ENCODE measurements at regions of chr16 and their contacts with region 1.

Region 1: GRCh38 chr16:69565671-69566239 is at the start of gene NFAT5:
- DNase-seq: peak; percentile 96 to 98
- H3K4me3 ChIP-seq: peak within 1 kb of the TSS; percentile 89
- H3K4me3 Mint-ChIP-seq: peak within 1 kb of the TSS; percentile 98
- H3K27ac Mint-ChIP-seq: peak within 1 kb of the TSS; percentile 96
- H3K4me1 ChIP-seq: peaks cover 38% of the 10 kb centered on the region
- H3K4me1 Mint-ChIP-seq: peaks cover 24% of the 10 kb centered on the region
- H3K27me3 ChIP-seq: no peaks in the 10 kb centered on the region
- H3K27me3 Mint-ChIP-seq: no peaks in the 10 kb centered on the region
- CTCF ChIP-seq: peak in 1 of 2 experiments; percentile 43
- total RNA-seq, gene NFAT5: 87.6 and 89.8 TPM in 2 replicates

Region 2: GRCh38 chr16:69404275-69404805 is 161.4 kb before region 1 on chr16:
- CTCF ChIA-PET with region 1: interaction called, 5 read pairs
- POLR2A ChIA-PET with region 1: no interaction called
- intact Hi-C with region 1: loop called (anchors 1 kb)
- DNase-seq: peak; percentile 90 to 96
- H3K4me3 ChIP-seq: peak overlapping the region; percentile 21
- H3K4me3 Mint-ChIP-seq: peak overlapping the region; percentile 43
- H3K27ac Mint-ChIP-seq: peak overlapping the region; percentile 50
- H3K4me1 ChIP-seq: peaks cover 53% of the 10 kb centered on the region
- H3K4me1 Mint-ChIP-seq: peaks cover 48% of the 10 kb centered on the region
- H3K27me3 ChIP-seq: no peaks in the 10 kb centered on the region
- H3K27me3 Mint-ChIP-seq: no peaks in the 10 kb centered on the region
- CTCF ChIP-seq: no peak

Region 3: DNA sequence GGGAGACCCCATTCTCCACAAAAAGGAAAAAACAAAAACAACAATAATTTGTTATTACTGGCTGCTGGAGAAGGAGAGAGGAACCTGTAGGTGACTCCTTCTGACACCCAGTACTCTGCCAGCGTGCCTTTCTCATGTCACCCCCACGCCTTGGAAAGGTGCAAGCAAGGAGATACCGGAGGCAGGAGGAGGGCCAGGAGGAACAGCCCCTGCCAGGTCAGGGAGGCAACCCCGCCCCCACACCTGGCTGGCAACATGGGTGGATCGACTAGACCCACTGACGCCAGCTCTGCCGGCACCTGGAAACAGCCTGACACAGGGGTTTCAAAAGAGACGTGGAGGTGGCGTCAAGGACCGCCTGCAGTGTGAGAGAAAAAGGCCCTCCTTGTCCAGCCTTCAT is 79.1 kb before region 1 on chr16:
- CTCF ChIA-PET with region 1: no interaction called
- POLR2A ChIA-PET with region 1: no interaction called
- intact Hi-C with region 1: no loop called
- DNase-seq: no peak
- H3K4me3 ChIP-seq: no peak overlapping the region
- H3K4me3 Mint-ChIP-seq: no peak overlapping the region
- H3K27ac Mint-ChIP-seq: no peak overlapping the region
- H3K4me1 ChIP-seq: no peaks in the 10 kb centered on the region
- H3K4me1 Mint-ChIP-seq: peaks cover 6% of the 10 kb centered on the region
- H3K27me3 ChIP-seq: no peaks in the 10 kb centered on the region
- H3K27me3 Mint-ChIP-seq: no peaks in the 10 kb centered on the region
- CTCF ChIP-seq: no peak

Region 4: DNA sequence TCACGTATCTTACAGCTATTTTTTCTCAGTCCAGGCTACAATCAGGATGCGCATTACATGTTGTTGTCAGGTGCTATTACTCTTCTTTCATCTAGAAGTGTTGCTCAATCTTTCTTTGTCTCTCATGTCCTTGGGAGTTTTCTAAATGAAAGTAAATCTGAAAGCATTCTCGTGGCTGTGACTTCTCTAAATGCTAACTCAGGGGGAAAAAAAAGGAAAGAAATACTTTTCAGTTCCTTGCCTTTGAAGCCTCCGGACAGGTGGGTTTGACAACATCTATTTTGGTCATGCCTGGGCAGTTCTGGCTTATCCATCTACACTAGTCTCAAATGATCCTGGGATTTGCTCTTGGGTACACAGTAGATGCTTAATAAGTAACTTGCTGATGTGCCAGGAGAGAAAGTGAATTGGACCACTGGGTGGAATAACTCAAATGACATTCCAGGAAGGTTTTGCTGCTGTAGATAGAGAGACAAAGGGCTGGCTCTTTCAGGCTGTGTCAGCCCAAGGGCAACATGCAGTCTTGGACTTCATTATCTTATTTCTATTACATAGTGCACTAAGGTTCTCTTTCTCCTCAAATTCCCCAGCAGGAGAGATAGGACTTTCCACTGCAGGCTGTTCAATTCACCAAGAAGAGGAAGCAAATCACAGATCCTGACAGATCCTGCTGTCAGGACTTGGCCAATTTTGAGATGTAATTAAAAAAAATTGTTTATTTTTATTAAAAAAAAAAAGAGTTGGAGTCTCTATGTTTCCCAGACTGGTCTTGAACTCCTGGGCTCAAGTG is 63.6 kb before region 1 on chr16:
- CTCF ChIA-PET with region 1: no interaction called
- POLR2A ChIA-PET with region 1: interaction called, 7 read pairs
- intact Hi-C with region 1: loop called (anchors 1 kb)
- DNase-seq: peak; percentile 90 to 91
- H3K4me3 ChIP-seq: no peak overlapping the region
- H3K4me3 Mint-ChIP-seq: peak overlapping the region; percentile 61
- H3K27ac Mint-ChIP-seq: peak overlapping the region; percentile 82
- H3K4me1 ChIP-seq: peaks cover 31% of the 10 kb centered on the region
- H3K4me1 Mint-ChIP-seq: peaks cover 38% of the 10 kb centered on the region
- H3K27me3 ChIP-seq: no peaks in the 10 kb centered on the region
- H3K27me3 Mint-ChIP-seq: no peaks in the 10 kb centered on the region
- CTCF ChIP-seq: no peak

Region 5: DNA sequence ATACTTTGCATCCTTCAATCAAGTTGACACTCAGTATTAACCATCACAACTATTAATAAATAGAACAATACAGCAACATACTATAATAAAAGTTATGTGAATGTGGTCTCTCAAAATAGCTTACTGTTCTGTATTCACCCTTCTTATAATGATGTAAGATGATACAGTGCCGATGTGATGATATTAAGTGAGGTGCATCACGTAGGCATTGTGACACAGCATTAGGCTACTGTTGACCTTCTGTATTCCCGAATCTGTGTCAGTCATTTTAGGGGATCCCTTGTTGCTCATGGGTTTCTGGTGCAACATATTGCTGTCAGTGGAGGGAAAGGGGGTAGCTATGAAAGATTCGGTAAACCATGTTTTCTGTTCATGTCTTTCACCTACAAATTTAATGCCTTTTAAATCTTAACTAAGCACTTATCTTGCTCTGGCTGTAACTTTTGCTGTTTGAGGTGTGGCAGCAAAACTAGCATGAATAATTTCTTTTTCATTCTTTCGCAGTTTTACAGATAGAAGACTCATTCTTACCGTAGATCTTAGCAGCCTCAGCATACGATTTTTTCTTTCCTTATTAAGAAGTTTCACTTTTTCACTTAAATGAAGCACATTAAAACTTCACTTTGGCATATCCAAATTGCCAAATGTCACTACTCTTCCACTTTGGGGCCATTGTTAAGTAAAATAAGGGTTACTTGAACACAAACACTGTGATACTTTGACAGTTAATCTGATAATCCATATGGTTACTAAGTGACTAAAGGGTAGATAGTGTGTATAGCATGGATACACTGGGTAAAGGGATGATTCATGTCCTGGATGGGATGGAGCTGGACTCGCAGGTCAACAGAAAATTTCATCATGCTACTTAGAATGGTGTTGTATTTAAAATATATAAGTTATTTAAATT is 29.6 kb after region 1 on chr16:
- CTCF ChIA-PET with region 1: no interaction called
- POLR2A ChIA-PET with region 1: interaction called, 13 read pairs
- intact Hi-C with region 1: no loop called
- DNase-seq: no peak
- H3K4me3 ChIP-seq: no peak overlapping the region
- H3K4me3 Mint-ChIP-seq: peak overlapping the region; percentile 18
- H3K27ac Mint-ChIP-seq: no peak overlapping the region
- H3K4me1 ChIP-seq: peaks cover 43% of the 10 kb centered on the region
- H3K4me1 Mint-ChIP-seq: peaks cover 35% of the 10 kb centered on the region
- H3K27me3 ChIP-seq: no peaks in the 10 kb centered on the region
- H3K27me3 Mint-ChIP-seq: no peaks in the 10 kb centered on the region
- CTCF ChIP-seq: no peak

Measured in Caco-2 (cell line).